ENCODE measurements at regions of chr3 and their contacts with region 1.

Region 1: DNA sequence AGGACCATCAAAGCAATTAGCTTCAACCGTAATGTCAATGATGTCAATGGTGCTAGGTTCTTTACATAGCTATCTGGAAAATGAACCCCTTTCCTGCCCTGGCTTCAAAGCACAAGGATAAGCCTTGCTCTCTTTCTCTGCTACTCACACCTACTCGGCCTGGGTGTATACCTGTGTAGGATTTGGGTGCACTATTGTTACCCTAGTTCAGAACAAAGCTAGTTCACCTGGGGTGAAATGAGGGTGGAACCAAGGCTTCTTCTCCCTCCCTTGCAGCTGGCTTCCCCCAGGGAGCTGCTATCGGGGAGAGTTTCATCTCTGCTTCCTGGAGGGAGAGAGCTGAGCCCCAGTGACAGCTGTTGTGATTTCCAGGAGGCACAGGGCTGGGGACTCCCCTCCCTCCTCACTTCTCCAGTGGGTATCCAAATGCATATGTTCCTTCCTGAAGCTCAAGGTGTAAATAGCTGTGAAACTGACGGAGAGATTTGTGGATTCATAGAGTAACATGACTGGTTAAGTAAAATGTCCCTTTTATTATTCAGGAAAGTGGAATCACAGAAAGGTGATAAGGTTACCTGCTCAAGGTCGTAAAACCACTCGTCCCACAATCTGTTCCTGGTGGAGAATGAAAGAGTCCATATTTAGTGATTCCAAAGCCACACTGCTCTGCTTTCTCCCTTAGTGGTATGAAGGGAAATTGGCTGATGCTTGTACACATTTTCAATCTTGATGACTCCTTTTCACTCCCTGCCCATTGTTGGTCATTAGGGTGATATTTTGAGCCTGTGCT is 11.8 kb upstream of the C3orf70 start:
- DNase-seq: no peak
- CTCF ChIP-seq: no peak

Region 2: DNA sequence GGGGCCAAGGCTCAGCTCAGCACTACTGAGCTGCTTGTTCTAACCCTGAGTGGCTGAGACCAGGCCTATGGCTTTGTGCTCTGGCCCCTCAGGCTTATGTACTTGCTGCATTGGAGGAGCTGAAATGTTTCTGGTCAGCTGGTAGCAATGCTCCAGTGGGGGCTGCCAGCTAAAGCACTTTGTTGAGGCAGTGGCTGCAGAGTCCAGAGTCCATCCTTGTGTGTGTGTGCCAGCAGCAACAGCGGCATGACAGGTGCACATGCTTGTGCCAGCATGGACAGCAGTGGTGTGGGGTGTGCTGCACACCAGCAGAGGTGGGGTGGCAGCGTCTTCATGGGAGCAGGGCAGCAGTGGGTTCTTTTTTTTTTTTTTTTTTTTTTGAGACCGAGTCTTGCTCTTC is 183.6 kb before region 1 on chr3:
- CTCF ChIA-PET with region 1: no interaction called
- POLR2A ChIA-PET with region 1: no interaction called
- DNase-seq: no peak
- CTCF ChIP-seq: no peak

Region 3: GRCh38 chr3:185152410-185153210 is 12.0 kb before region 1 on chr3 and contains the start of gene C3orf70:
- CTCF ChIA-PET with region 1: interaction called, 12 read pairs
- POLR2A ChIA-PET with region 1: no interaction called
- DNase-seq: peak; percentile 50
- CTCF ChIP-seq: no peak